PC-9 (cell line): ENCODE measurements at regions of chr7 and their contacts with region 1.

Region 1: GRCh38 chr7:78530351-78530750 is 731.8 kb downstream of the PHTF2 start:
- DNase-seq: no peak
- H3K4me3 ChIP-seq: no peak overlapping the region
- H3K27ac ChIP-seq: no peak overlapping the region
- H3K4me1 ChIP-seq: no peaks in the 10 kb centered on the region
- H3K27me3 ChIP-seq: no peaks in the 10 kb centered on the region
- CTCF ChIP-seq: no peak

Region 2: GRCh38 chr7:78355834-78356233 is 174.5 kb before region 1 on chr7:
- CTCF ChIA-PET with region 1: no interaction called
- POLR2A ChIA-PET with region 1: no interaction called
- intact Hi-C with region 1: no loop called
- DNase-seq: no peak
- H3K4me3 ChIP-seq: no peak overlapping the region
- H3K27ac ChIP-seq: no peak overlapping the region
- H3K4me1 ChIP-seq: no peaks in the 10 kb centered on the region
- H3K27me3 ChIP-seq: no peaks in the 10 kb centered on the region
- CTCF ChIP-seq: no peak

Region 3: DNA sequence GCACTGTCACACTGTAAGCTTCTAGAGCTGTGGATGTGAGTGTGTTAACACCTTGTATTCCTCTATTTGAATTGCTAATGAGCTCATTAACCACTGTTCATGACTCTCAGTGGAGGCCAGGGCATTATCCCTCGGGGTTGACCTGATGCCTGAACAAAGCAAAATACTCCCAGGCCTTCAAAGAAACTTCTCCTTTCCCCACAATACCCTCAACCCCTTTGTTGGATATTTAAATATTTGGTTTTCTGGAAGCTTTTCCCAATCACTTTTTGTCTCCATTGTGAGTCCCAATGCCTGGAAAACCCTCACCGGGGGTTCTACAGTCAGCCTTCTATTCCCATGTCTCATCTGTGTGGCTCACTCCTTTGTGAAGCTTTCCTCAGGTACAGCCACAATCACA is 48.3 kb after region 1 on chr7:
- CTCF ChIA-PET with region 1: no interaction called
- POLR2A ChIA-PET with region 1: no interaction called
- intact Hi-C with region 1: loop called (anchors 1 kb)
- DNase-seq: no peak
- H3K4me3 ChIP-seq: no peak overlapping the region
- H3K27ac ChIP-seq: no peak overlapping the region
- H3K4me1 ChIP-seq: no peaks in the 10 kb centered on the region
- H3K27me3 ChIP-seq: no peaks in the 10 kb centered on the region
- CTCF ChIP-seq: no peak